GM12878 (cell line): ENCODE measurements at regions of chr20 and their contacts with region 1.

Region 1: GRCh38 chr20:40990542-40991120 is 38.0 kb upstream of the TOP1 start:
- DNase-seq: peak; percentile 70
- ATAC-seq: peak; percentile 87
- H3K4me3 ChIP-seq: peak overlapping the region; percentile 33; the same call in 1 of the 2 replicates
- H3K27ac ChIP-seq: peak overlapping the region; percentile 98
- H3K4me1 ChIP-seq: peaks cover 39% of the 10 kb centered on the region
- H3K27me3 ChIP-seq: no peaks in the 10 kb centered on the region
- CTCF ChIP-seq: peak; percentile 85 to 95 (median 90)
- EP300 ChIP-seq: no peak
- POLR2A ChIP-seq: no peak
- RAD21 ChIP-seq: peak; percentile 96

Region 2: DNA sequence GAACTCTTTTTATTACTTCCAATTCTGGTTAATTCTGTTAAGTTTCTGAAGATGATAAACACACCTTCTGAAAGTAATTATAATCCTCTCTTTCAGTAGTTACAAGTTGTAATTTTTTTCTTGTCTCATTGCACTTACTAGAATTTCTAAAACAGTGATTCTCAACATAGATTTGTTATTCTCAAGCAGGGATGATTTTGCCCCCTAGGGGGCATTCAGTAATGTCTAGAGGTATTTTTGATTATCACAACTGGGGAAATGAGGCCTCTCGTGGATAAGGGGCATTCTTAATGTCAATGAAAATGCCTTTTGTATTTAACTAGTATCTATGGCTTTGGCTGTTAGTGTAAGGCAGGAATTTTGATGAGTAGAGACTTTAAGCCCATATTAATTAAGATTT is 262.2 kb before region 1 on chr20:
- CTCF ChIA-PET with region 1: no interaction called
- POLR2A ChIA-PET with region 1: no interaction called
- RAD21 ChIA-PET with region 1: no interaction called
- SMC1A ChIA-PET with region 1: no interaction called
- in situ Hi-C with region 1: no loop called
- intact Hi-C with region 1: no loop called
- DNase-seq: no peak
- ATAC-seq: no peak
- H3K4me3 ChIP-seq: no peak overlapping the region
- H3K27ac ChIP-seq: no peak overlapping the region
- H3K4me1 ChIP-seq: no peaks in the 10 kb centered on the region
- H3K27me3 ChIP-seq: no peaks in the 10 kb centered on the region; a peak in 1 of 4 replicates
- CTCF ChIP-seq: 0 out of 6 replicates have a peak, but pooled peaks of 2 of the 3 experiments have one; percentile 17 to 18
- EP300 ChIP-seq: no peak
- POLR2A ChIP-seq: no peak
- RAD21 ChIP-seq: no peak

Region 3: DNA sequence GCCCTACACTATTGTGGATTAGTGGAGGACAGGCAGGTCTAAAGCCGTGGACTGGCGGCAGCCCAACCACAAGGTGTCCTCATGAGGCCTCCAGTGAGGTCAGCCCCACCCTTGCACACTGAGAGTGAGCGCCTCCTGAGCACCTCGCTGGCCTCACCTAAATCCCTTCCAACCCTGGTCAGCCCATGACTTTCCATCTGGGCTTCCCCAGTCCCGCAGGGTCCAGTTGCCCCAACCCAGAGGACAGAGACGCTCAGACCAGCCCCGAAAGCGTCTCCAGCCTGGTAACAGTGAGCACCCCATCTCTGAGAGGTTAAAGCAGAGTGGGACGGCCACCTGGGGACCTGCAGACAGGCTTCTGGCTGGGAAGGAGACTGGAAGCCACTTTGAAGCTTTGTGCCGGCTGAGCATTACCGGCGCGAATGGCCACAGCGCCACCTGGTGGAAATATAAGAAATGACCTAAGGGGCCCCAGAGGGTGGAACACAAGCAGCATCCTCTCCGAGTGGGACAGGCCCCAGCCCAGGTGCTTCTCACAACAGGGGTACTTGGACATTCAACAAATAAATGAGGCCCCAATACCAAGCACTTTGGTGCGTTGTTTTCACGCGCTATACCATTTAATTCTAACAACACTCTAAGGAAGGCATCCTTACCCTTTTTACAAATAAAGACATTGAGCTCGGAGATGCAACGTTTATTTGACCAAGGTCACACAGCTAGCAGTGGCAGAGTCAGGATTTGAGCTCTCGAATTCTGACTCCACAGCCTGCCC is 27.7 kb before region 1 on chr20:
- CTCF ChIA-PET with region 1: interaction called, 77 read pairs
- POLR2A ChIA-PET with region 1: interaction called, 3 read pairs
- RAD21 ChIA-PET with region 1: interaction called, 51 read pairs
- SMC1A ChIA-PET with region 1: interaction called, 69 read pairs
- in situ Hi-C with region 1: no loop called
- intact Hi-C with region 1: loop called (anchors 1 kb)
- DNase-seq: no peak
- ATAC-seq: peak; percentile 93
- H3K4me3 ChIP-seq: no peak overlapping the region
- H3K27ac ChIP-seq: no peak overlapping the region
- H3K4me1 ChIP-seq: no peaks in the 10 kb centered on the region
- H3K27me3 ChIP-seq: no peaks in the 10 kb centered on the region; a peak in 1 of 4 replicates
- CTCF ChIP-seq: peak; percentile 76 to 92 (median 78)
- EP300 ChIP-seq: no peak
- POLR2A ChIP-seq: no peak
- RAD21 ChIP-seq: peak; percentile 91

Region 4: GRCh38 chr20:41011551-41012067 is 21.0 kb after region 1 on chr20:
- CTCF ChIA-PET with region 1: interaction called, 256 read pairs
- POLR2A ChIA-PET with region 1: interaction called, 106 read pairs
- RAD21 ChIA-PET with region 1: interaction called, 187 read pairs
- SMC1A ChIA-PET with region 1: interaction called, 333 read pairs
- in situ Hi-C with region 1: no loop called
- intact Hi-C with region 1: loop called (anchors 1 kb)
- DNase-seq: peak; percentile 95
- ATAC-seq: peak; percentile 95
- H3K4me3 ChIP-seq: peak overlapping the region; percentile 38
- H3K27ac ChIP-seq: peak overlapping the region; percentile 91
- H3K4me1 ChIP-seq: peaks cover 44% of the 10 kb centered on the region
- H3K27me3 ChIP-seq: no peaks in the 10 kb centered on the region
- CTCF ChIP-seq: no peak
- EP300 ChIP-seq: peak; percentile 83 to 88
- POLR2A ChIP-seq: no peak
- RAD21 ChIP-seq: peak; percentile 30; the same call in 1 of the 2 replicates

Region 5: DNA sequence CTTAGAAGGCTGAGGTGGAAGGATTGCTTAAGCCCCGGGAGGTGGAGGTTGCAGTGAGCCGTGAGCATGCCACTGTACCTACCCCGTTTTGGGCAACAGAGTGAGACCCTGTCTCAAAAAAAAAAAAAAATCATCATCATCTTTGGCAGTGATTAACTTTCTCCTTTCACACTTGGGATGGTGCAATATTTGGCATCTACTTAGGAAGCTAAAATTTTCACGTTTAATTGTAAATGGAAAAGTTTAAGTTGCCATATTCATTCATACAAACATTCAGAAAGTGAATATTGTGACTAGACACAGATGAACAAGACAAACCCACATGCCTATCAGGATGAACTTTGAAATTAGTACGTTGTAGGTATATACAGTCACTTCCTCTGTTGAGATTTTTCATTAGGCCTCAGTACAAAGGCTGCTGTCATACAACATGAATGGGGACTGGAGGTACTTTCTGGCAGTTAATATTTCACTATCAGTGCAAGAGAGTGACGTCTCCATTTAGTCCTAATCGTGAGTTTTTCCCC is 48.3 kb after region 1 on chr20:
- CTCF ChIA-PET with region 1: interaction called, 510 read pairs
- POLR2A ChIA-PET with region 1: interaction called, 67 read pairs
- RAD21 ChIA-PET with region 1: interaction called, 696 read pairs
- SMC1A ChIA-PET with region 1: interaction called, 456 read pairs
- in situ Hi-C with region 1: no loop called
- intact Hi-C with region 1: no loop called
- DNase-seq: no peak
- ATAC-seq: peak; percentile 90
- H3K4me3 ChIP-seq: no peak overlapping the region
- H3K27ac ChIP-seq: 0 out of 2 replicates have a peak overlapping the region, but pooled peaks have one; percentile 23
- H3K4me1 ChIP-seq: no peaks in the 10 kb centered on the region
- H3K27me3 ChIP-seq: no peaks in the 10 kb centered on the region
- CTCF ChIP-seq: no peak
- EP300 ChIP-seq: peak; percentile 31 to 77; a peak in 3 of 4 replicates
- POLR2A ChIP-seq: no peak
- RAD21 ChIP-seq: no peak

Region 6: GRCh38 chr20:41072190-41072863 is 81.7 kb after region 1 on chr20:
- CTCF ChIA-PET with region 1: interaction called, 281 read pairs
- POLR2A ChIA-PET with region 1: interaction called, 12 read pairs
- RAD21 ChIA-PET with region 1: interaction called, 29 read pairs
- SMC1A ChIA-PET with region 1: interaction called, 231 read pairs
- in situ Hi-C with region 1: no loop called
- intact Hi-C with region 1: no loop called
- DNase-seq: no peak
- ATAC-seq: peak; percentile 18; the same call in 2 of the 3 replicates
- H3K4me3 ChIP-seq: no peak overlapping the region
- H3K27ac ChIP-seq: peak overlapping the region; percentile 9; the same call in 1 of the 2 replicates
- H3K4me1 ChIP-seq: peaks cover 15% of the 10 kb centered on the region
- H3K27me3 ChIP-seq: no peaks in the 10 kb centered on the region
- CTCF ChIP-seq: no peak
- EP300 ChIP-seq: no peak
- POLR2A ChIP-seq: no peak
- RAD21 ChIP-seq: no peak

Region 7: DNA sequence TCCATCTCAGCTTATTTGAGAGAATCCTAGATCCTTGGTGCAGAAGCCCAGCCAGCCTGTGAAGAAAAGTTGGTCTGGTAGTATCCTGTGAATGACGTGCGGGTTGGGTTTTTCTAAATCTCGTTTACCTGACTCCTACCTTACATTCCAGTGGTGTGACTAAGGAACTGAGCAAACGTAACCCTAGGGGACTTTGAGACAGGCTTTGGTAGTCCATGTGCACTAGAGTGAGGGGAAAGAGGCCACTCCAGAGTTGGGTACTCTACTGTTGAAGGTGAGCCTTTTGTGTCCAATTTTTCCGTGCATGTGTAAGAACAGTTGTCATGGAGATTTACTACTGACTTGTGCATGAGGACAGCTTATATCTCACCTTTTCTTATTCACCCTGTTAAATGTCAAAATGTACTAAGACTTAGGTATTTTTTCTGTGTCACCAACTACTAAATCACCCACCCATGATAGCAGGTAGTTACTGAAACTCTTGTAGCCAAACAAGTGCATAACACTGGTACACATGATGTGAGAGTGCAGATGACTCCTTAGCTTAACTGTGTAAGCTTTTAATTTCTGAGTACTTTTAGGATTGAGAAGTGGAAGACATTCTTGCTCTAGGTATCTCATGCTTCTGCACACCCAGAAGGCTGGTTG is 120.4 kb after region 1 on chr20:
- CTCF ChIA-PET with region 1: interaction called, 5 read pairs
- POLR2A ChIA-PET with region 1: no interaction called
- RAD21 ChIA-PET with region 1: interaction called, 11 read pairs
- SMC1A ChIA-PET with region 1: interaction called, 13 read pairs
- in situ Hi-C with region 1: no loop called
- intact Hi-C with region 1: no loop called
- DNase-seq: no peak
- ATAC-seq: peak; percentile 83
- H3K4me3 ChIP-seq: no peak overlapping the region
- H3K27ac ChIP-seq: no peak overlapping the region
- H3K4me1 ChIP-seq: peaks cover 5% of the 10 kb centered on the region; the same call in 1 of the 2 replicates
- H3K27me3 ChIP-seq: no peaks in the 10 kb centered on the region
- CTCF ChIP-seq: no peak
- EP300 ChIP-seq: no peak
- POLR2A ChIP-seq: no peak; the same call in 1 of the 2 replicates
- RAD21 ChIP-seq: no peak

Region 8: GRCh38 chr20:41173161-41173721 is 182.6 kb after region 1 on chr20:
- CTCF ChIA-PET with region 1: interaction called, 10 read pairs
- POLR2A ChIA-PET with region 1: no interaction called
- RAD21 ChIA-PET with region 1: interaction called, 4 read pairs
- SMC1A ChIA-PET with region 1: no interaction called
- in situ Hi-C with region 1: no loop called
- intact Hi-C with region 1: no loop called
- DNase-seq: no peak
- ATAC-seq: peak; percentile 97
- H3K4me3 ChIP-seq: no peak overlapping the region
- H3K27ac ChIP-seq: no peak overlapping the region
- H3K4me1 ChIP-seq: no peaks in the 10 kb centered on the region
- H3K27me3 ChIP-seq: no peaks in the 10 kb centered on the region
- CTCF ChIP-seq: peak; percentile 87 to 94 (median 92)
- EP300 ChIP-seq: no peak
- POLR2A ChIP-seq: no peak
- RAD21 ChIP-seq: peak; percentile 90